Mammary epithelial cell (primary cell): ENCODE measurements at regions of chr7 and their contacts with region 1.

Region 1: GRCh38 chr7:29285444-29285793 is 90.8 kb downstream of the CHN2 start:
- DNase-seq: peak; percentile 97
- H3K4me3 ChIP-seq: no peak overlapping the region
- H3K27ac ChIP-seq: peak overlapping the region; percentile 60
- H3K4me1 ChIP-seq: peaks cover 48% of the 10 kb centered on the region
- H3K27me3 ChIP-seq: no peaks in the 10 kb centered on the region
- CTCF ChIP-seq: no peak

Region 2: DNA sequence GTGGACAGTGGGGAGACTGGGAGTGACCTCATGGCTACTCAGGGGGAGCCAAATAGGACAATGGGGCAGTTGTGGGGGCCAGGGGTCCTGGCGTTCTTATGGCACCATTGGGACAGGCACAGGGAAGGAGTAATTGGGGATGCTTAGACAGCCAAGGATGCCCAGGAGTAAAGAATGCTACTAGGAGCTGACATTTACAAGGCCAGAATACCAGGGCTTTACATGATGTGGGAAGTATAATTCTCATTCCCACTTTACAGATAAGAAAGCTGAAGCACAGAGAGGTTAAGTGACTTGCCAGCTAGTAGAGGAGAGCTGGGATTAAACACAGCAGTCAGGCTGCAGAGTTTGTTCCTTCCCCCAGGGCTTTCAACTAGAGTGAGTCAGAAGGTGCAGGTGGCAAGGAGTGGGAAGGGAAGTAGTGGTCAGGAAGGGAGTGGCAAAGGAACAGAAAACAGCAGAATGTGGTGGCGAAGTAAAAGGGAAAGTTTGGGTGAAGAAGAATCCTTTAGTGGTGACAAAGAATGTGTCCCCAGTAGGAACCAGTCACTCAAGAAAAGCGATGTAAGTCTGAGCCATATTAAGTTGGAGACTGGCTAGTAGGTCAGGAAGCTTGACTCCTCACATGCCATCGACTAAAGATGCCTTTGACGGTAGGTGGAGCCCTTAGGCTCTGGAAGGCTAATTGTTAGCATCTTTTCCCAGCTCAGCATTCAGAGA is 171.9 kb before region 1 on chr7:
- CTCF ChIA-PET with region 1: no interaction called
- dilution Hi-C with region 1: no loop called
- in situ Hi-C with region 1: no loop called
- intact Hi-C with region 1: loop called (anchors 5 kb)
- DNase-seq: peak; percentile 91
- H3K4me3 ChIP-seq: peak overlapping the region in 1 of 3 experiments; percentile 32
- H3K27ac ChIP-seq: peak overlapping the region; percentile 53
- H3K4me1 ChIP-seq: peaks cover 54% of the 10 kb centered on the region
- H3K27me3 ChIP-seq: no peaks in the 10 kb centered on the region
- CTCF ChIP-seq: peak; percentile 44 to 58

Region 3: GRCh38 chr7:29255906-29256782 is 29.3 kb before region 1 on chr7:
- CTCF ChIA-PET with region 1: no interaction called
- dilution Hi-C with region 1: no loop called
- in situ Hi-C with region 1: no loop called
- intact Hi-C with region 1: loop called (anchors 2 kb)
- DNase-seq: peak; percentile 81
- H3K4me3 ChIP-seq: no peak overlapping the region
- H3K27ac ChIP-seq: no peak overlapping the region
- H3K4me1 ChIP-seq: peaks cover 12% of the 10 kb centered on the region
- H3K27me3 ChIP-seq: no peaks in the 10 kb centered on the region
- CTCF ChIP-seq: no peak

Region 4: DNA sequence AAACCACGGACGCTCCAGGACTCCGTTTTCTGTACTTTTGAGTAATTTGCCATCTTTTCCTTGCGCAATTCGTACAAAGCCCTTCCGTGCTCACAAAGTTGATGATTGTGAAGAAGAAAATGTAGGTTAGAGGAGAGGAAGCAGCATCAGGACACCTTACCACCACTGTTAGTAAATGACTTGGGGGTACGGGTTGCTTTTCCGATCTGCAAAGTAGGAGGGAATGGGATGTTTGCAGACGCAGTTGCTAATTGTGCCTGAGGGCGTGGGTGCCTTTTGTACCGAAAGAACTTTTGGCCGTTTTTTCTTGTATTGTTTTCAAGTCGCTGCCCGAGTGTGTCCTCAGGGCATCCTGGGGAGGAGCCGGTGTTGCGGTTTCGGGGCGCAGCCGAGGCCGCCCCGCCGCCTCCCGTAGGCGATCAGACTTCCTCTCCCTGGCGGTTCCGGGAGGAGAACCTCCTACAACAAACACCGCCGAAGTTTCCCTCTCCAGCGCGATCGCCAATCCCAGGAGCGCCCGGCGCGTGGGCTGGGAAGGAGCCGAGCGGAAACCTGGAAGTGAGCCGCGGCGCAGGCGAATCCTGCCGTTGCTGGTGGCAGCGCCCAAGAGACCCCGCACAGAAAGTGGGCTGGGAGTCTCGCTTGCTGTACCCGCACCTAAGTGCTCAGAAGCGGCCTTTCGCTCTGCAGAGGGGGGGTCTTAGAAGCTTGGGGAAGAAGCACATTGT is 279.2 kb after region 1 on chr7:
- CTCF ChIA-PET with region 1: no interaction called
- dilution Hi-C with region 1: no loop called
- in situ Hi-C with region 1: no loop called
- intact Hi-C with region 1: loop called (anchors 5 kb)
- DNase-seq: peak; percentile 85
- H3K4me3 ChIP-seq: peak overlapping the region; percentile 64 to 84 (median 72)
- H3K27ac ChIP-seq: peak overlapping the region; percentile 78
- H3K4me1 ChIP-seq: peaks cover 29% of the 10 kb centered on the region
- H3K27me3 ChIP-seq: no peaks in the 10 kb centered on the region
- CTCF ChIP-seq: no peak